Naive thymus-derived CD4-positive, alpha-beta T cell (primary cell): ENCODE measurements at regions of chr2 and their contacts with region 1.

Region 1: GRCh38 chr2:64018923-64019718 is at the start of gene VPS54:
- DNase-seq: peak; percentile 42 to 76 (median 65)
- ATAC-seq: peak; percentile 87
- H3K4me3 ChIP-seq: peak within 1 kb of the TSS; percentile 86
- H3K4me3 Mint-ChIP-seq: peak within 1 kb of the TSS; percentile 94 to 100 (median 98)
- H3K27ac ChIP-seq: peak within 1 kb of the TSS; percentile 79
- H3K27ac Mint-ChIP-seq: peak within 1 kb of the TSS; percentile 95 to 100 (median 97)
- H3K4me1 ChIP-seq: peaks cover 22 to 31% of the 10 kb centered on the region in 2 donors
- H3K4me1 Mint-ChIP-seq: peaks cover 20 to 60% (median 48%) of the 10 kb centered on the region in 7 donors
- H3K27me3 ChIP-seq: no peaks in the 10 kb centered on the region
- H3K27me3 Mint-ChIP-seq: no peaks in the 10 kb centered on the region
- total RNA-seq, gene VPS54: 13.2 to 20.8 (median 15.6) TPM

Region 2: GRCh38 chr2:63977904-63978303 is 41.2 kb before region 1 on chr2:
- CTCF ChIA-PET with region 1: no interaction called
- POLR2A ChIA-PET with region 1: interaction called, 3 read pairs
- intact Hi-C with region 1: loop called (anchors 5 kb)
- DNase-seq: peak in 5 of 9 donors; percentile 9 to 25 (median 15)
- ATAC-seq: peak; percentile 57
- H3K4me3 ChIP-seq: no peak overlapping the region
- H3K4me3 Mint-ChIP-seq: peak overlapping the region in 9 of 10 donors; percentile 1 to 55 (median 36)
- H3K27ac ChIP-seq: no peak overlapping the region
- H3K27ac Mint-ChIP-seq: peak overlapping the region; percentile 11 to 75 (median 62)
- H3K4me1 ChIP-seq: peaks cover 5 to 8% of the 10 kb centered on the region in 2 donors
- H3K4me1 Mint-ChIP-seq: peaks cover 7 to 36% (median 31%) of the 10 kb centered on the region in 7 donors
- H3K27me3 ChIP-seq: no peaks in the 10 kb centered on the region
- H3K27me3 Mint-ChIP-seq: no peaks in the 10 kb centered on the region

Region 3: DNA sequence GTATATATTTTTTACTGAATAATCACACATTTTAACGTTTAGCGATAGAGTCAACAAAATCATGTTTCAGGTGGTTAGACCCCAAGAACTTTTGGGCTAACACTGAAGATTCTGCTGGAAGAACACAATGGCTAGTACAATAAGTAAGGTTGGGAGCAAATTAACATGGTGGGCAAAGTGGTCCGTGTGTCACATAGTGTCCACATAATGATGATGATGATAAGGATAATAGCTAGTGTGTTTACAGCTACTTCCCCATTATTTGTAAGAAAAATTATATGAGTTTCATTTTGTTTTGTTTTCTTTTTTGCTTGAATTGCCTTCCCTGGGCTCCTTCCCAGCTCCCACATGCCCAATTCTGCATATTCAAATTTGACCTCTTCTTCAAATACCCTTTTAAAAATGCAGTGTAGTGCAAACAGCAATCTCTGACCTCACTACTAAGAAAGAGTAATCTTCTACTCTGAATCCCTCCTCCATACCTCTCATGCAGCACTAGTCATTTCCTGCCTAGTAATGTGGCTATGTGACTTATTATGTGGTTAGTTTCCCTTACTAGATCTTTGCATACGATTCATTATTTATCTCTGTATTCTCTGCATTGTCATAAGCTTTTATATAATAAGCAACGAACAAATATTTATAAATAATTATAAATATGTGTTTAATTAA is 17.0 kb after region 1 on chr2:
- CTCF ChIA-PET with region 1: interaction called, 4 read pairs
- POLR2A ChIA-PET with region 1: interaction called, 19 read pairs
- intact Hi-C with region 1: loop called (anchors 1 kb)
- DNase-seq: peak in 7 of 9 donors; percentile 60 to 75 (median 64)
- ATAC-seq: peak; percentile 98
- H3K4me3 ChIP-seq: peak overlapping the region; percentile 25
- H3K4me3 Mint-ChIP-seq: peak overlapping the region; percentile 30 to 86 (median 60)
- H3K27ac ChIP-seq: peak overlapping the region; percentile 54
- H3K27ac Mint-ChIP-seq: peak overlapping the region; percentile 49 to 93 (median 83)
- H3K4me1 ChIP-seq: peaks cover 20 to 42% of the 10 kb centered on the region in 2 donors
- H3K4me1 Mint-ChIP-seq: peaks cover 29 to 70% (median 54%) of the 10 kb centered on the region in 7 donors
- H3K27me3 ChIP-seq: no peaks in the 10 kb centered on the region
- H3K27me3 Mint-ChIP-seq: no peaks in the 10 kb centered on the region

Region 4: GRCh38 chr2:65129826-65130663 is 1110.9 kb after region 1 on chr2 and contains the start of gene RAB1A:
- CTCF ChIA-PET with region 1: no interaction called
- POLR2A ChIA-PET with region 1: interaction called, 3 read pairs
- intact Hi-C with region 1: loop called in 1 of 2 experiments (anchors 2 kb)
- DNase-seq: peak; percentile 91 to 99 (median 98)
- ATAC-seq: peak; percentile 94
- H3K4me3 ChIP-seq: peak within 1 kb of the TSS; percentile 78
- H3K4me3 Mint-ChIP-seq: peak within 1 kb of the TSS; percentile 90 to 100 (median 98)
- H3K27ac ChIP-seq: peak within 1 kb of the TSS; percentile 98
- H3K27ac Mint-ChIP-seq: peak within 1 kb of the TSS; percentile 95 to 100 (median 99)
- H3K4me1 ChIP-seq: peaks cover 24 to 25% of the 10 kb centered on the region in 2 donors
- H3K4me1 Mint-ChIP-seq: peaks cover 24 to 47% (median 35%) of the 10 kb centered on the region in 7 donors
- H3K27me3 ChIP-seq: no peaks in the 10 kb centered on the region
- H3K27me3 Mint-ChIP-seq: peaks cover 0 to 17% (median 0%) of the 10 kb centered on the region in 5 donors
- total RNA-seq, gene RAB1A: 48.8 to 78.6 (median 65.8) TPM